Activated B cell treated with CpG ODN at 0.5 μM for 24 hours (primary cell): ENCODE measurements at regions of chr1 and their contacts with region 1.

Region 1: DNA sequence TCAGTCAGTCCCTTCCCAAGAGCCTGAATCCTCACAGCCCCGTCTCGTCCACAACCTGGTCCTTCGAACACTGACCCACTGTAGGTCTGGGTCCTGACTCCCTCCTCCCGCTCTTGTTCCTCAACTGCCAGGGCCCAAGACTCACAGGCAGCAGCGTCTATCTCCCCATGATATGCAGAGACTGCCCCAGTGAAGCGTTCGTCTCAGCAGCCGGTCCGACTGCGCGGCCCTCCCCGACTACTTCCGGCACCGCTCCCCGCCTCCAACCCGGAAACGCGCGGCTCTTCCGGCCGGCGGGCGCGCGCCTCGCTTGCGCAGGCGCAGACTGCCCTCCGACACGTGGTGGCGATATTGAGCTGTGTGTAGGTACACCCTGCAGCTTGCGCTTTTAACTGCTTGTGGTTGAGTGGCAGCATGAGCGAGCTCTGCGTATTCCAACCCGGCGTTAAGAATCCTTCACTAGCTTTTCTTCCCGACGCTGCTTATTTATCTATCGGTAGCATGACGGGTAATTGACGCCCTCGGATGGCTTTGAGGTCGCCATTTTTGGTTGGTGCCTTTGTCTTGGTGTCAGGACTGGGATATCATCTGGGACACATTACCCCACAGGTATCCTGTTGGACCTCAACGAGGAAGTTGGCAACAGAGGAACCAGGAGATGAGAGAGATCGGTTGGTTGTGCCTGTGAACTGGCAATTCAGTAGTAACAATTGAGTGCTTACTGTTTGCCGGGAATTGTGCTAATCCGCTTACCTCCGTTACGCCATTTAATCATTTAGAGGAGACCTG is at the start of gene TAF12:
- DNase-seq: peak; percentile 78
- ATAC-seq: peak; percentile 80
- H3K4me3 Mint-ChIP-seq: peak within 1 kb of the TSS; percentile 96
- H3K27ac Mint-ChIP-seq: peak within 1 kb of the TSS; percentile 97
- H3K4me1 Mint-ChIP-seq: peaks cover 50% of the 10 kb centered on the region
- H3K27me3 Mint-ChIP-seq: no peaks in the 10 kb centered on the region
- CTCF ChIP-seq: no peak
- total RNA-seq, gene TAF12: 17.1 and 18.5 TPM in 2 replicates

Region 2: GRCh38 chr1:26666855-26667254 is 1976.2 kb before region 1 on chr1:
- CTCF ChIA-PET with region 1: no interaction called
- POLR2A ChIA-PET with region 1: no interaction called
- intact Hi-C with region 1: no loop called
- DNase-seq: no peak
- ATAC-seq: no peak
- H3K4me3 Mint-ChIP-seq: no peak overlapping the region
- H3K27ac Mint-ChIP-seq: no peak overlapping the region
- H3K4me1 Mint-ChIP-seq: no peaks in the 10 kb centered on the region
- H3K27me3 Mint-ChIP-seq: no peaks in the 10 kb centered on the region
- CTCF ChIP-seq: no peak

Region 3: DNA sequence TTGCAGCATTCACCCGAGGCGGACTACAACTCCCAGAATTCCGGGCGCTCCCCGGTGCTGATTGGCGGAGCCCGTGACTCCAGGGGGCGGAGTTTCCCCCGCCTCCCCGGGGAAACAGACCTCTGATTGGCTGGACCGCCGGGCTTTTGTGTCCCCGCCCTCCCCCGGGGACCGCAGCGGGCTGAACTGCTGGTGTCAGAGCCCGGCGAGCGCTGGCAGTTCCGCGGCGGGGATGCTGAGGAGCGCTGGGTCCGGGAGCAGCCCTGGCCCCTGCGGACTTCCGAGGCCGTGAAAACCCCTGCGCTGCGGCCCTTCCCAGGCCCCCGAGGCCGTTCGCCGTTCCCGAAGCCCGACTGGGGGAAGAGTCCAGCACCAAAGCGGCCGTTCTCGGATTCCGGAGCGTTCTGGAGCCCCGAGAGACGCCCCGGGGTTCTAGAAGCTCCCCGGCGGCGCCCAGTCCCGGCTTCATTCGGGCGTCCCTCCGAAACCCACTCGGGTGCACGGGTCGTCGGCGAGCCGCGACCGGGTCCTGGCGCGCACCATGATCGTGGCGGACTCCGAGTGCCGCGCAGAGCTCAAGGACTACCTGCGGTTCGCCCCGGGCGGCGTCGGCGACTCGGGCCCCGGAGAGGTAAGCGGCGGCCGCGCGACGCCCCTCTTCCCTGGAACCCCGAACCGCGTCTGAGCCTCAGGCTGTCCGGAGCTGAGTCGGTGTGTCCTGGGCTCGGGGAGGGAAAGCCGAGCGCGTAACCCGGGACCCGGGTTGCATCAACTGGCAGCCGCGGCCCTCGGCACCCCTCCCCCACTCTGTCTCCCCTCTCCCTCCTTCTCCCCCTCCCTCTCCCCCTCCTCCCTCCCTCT is 383.5 kb before region 1 on chr1 and contains the start of gene SESN2:
- CTCF ChIA-PET with region 1: no interaction called
- POLR2A ChIA-PET with region 1: interaction called, 6 read pairs
- intact Hi-C with region 1: loop called (anchors 1 kb)
- DNase-seq: peak; percentile 99
- ATAC-seq: peak; percentile 98
- H3K4me3 Mint-ChIP-seq: peak within 1 kb of the TSS; percentile 82
- H3K27ac Mint-ChIP-seq: peak within 1 kb of the TSS; percentile 79
- H3K4me1 Mint-ChIP-seq: peaks cover 23% of the 10 kb centered on the region
- H3K27me3 Mint-ChIP-seq: peaks cover 6% of the 10 kb centered on the region
- CTCF ChIP-seq: no peak
- total RNA-seq, gene SESN2: 19.5 and 19.8 TPM in 2 replicates

Region 4: GRCh38 chr1:28510665-28511440 is 132.2 kb before region 1 on chr1:
- CTCF ChIA-PET with region 1: no interaction called
- POLR2A ChIA-PET with region 1: interaction called, 59 read pairs
- intact Hi-C with region 1: no loop called
- DNase-seq: no peak
- ATAC-seq: peak; percentile 8
- H3K4me3 Mint-ChIP-seq: peak overlapping the region; percentile 98
- H3K27ac Mint-ChIP-seq: peak overlapping the region; percentile 98
- H3K4me1 Mint-ChIP-seq: peaks cover 44% of the 10 kb centered on the region
- H3K27me3 Mint-ChIP-seq: no peaks in the 10 kb centered on the region
- CTCF ChIP-seq: no peak

Region 5: DNA sequence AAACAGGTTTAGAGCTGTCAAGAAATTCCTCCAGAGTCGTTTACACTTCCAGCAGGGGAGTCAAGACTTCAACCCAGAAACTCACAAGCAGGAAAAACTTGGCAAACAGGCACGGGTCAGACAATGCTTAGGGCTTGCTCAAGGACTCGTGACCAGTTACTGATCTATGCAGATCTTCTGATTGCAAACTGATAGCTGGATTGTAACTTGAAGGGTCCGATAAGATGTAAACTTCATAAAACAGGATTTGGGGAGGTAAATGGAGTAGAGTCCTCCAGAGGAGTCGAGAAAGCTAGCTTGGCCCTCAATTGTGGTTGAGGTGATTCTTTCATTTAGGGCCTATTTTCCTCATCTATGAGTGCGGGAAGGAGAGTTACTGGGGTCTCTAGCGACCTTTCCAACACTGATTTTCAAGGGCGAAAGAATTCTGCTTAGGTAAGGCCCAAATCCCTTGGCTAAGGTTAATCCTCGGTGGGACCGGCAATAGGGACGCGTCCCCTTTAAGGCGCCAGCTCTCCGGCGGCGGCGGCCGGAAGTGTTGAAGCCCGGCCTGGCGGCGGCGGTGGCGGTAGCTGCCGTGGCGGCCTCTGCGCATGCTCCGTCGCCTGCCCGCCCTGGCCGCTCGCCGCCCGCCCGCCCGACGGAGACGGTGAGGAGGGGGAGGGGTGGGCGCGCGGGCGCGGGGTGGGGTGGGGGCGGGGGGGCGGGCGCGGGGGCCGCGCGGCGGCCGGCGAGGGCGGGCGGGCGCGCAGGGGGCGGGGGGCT is 25.3 kb after region 1 on chr1 and contains the start of gene GMEB1:
- CTCF ChIA-PET with region 1: interaction called, 14 read pairs
- POLR2A ChIA-PET with region 1: interaction called, 287 read pairs
- intact Hi-C with region 1: loop called (anchors 1 kb)
- DNase-seq: peak; percentile 73
- ATAC-seq: peak; percentile 65
- H3K4me3 Mint-ChIP-seq: peak within 1 kb of the TSS; percentile 92
- H3K27ac Mint-ChIP-seq: peak within 1 kb of the TSS; percentile 97
- H3K4me1 Mint-ChIP-seq: peaks cover 17% of the 10 kb centered on the region
- H3K27me3 Mint-ChIP-seq: no peaks in the 10 kb centered on the region
- CTCF ChIP-seq: no peak
- total RNA-seq, gene GMEB1: 26.8 and 27.4 TPM in 2 replicates

Region 6: DNA sequence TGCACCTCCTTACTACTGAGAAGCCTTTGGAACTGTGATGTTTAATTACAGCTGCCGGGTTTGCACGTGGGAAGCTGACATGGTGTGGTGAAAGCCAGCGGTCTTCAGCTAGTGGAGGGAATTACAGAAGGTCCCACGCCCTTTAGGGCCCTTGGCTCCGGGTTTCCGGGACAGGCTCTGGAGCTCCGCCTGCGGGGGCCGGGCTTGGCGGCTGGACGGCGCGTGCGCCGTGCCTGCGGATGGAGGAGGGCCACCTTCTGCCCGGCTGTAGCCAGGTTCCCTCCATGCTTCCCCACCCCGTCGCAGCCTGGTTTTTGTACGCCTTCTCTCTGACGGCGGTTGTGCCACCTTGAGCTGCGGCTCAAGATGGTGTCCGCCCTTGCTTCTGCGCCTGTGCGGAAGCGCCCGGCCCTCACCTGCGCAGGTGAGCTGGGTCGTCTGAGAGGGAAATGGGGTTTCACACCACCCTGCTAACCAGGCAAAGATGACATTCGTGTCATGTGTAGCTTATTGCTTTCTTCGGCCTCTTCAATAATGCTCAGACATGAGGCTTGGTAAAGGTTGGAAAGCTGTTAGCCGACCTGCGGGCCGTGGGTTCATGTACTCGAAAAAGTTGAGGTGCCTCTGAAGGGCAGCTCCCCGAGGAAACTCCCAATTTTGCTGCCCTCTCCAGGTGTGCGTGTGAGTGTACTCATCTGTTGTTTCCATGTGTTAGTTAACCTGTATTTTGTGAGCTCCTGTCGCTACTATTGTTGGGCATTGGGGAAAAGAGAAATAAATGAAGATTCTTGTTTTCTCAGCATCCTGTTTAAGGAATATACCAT is 132.3 kb after region 1 on chr1:
- CTCF ChIA-PET with region 1: interaction called, 7 read pairs
- POLR2A ChIA-PET with region 1: interaction called, 20 read pairs
- intact Hi-C with region 1: no loop called
- DNase-seq: peak; percentile 62
- ATAC-seq: peak; percentile 95
- H3K4me3 Mint-ChIP-seq: peak overlapping the region; percentile 87
- H3K27ac Mint-ChIP-seq: peak overlapping the region; percentile 61
- H3K4me1 Mint-ChIP-seq: peaks cover 10% of the 10 kb centered on the region
- H3K27me3 Mint-ChIP-seq: no peaks in the 10 kb centered on the region
- CTCF ChIP-seq: no peak